A673 (cell line): ENCODE measurements at regions of chr3 and their contacts with region 1.

Region 1: GRCh38 chr3:5304789-5305683 is 117.5 kb downstream of the EDEM1 start:
- DNase-seq: peak; percentile 57
- H3K4me3 ChIP-seq: no peak overlapping the region
- H3K27ac ChIP-seq: no peak overlapping the region
- H3K4me1 ChIP-seq: no peaks in the 10 kb centered on the region
- H3K27me3 ChIP-seq: peaks cover 7% of the 10 kb centered on the region
- CTCF ChIP-seq: peak; percentile 75

Region 2: GRCh38 chr3:5136211-5136918 is 168.7 kb before region 1 on chr3:
- CTCF ChIA-PET with region 1: no interaction called
- POLR2A ChIA-PET with region 1: no interaction called
- intact Hi-C with region 1: loop called (anchors 10 kb)
- DNase-seq: peak; percentile 53
- H3K4me3 ChIP-seq: no peak overlapping the region
- H3K27ac ChIP-seq: no peak overlapping the region
- H3K4me1 ChIP-seq: peaks cover 7% of the 10 kb centered on the region
- H3K27me3 ChIP-seq: no peaks in the 10 kb centered on the region
- CTCF ChIP-seq: peak; percentile 63

Region 3: DNA sequence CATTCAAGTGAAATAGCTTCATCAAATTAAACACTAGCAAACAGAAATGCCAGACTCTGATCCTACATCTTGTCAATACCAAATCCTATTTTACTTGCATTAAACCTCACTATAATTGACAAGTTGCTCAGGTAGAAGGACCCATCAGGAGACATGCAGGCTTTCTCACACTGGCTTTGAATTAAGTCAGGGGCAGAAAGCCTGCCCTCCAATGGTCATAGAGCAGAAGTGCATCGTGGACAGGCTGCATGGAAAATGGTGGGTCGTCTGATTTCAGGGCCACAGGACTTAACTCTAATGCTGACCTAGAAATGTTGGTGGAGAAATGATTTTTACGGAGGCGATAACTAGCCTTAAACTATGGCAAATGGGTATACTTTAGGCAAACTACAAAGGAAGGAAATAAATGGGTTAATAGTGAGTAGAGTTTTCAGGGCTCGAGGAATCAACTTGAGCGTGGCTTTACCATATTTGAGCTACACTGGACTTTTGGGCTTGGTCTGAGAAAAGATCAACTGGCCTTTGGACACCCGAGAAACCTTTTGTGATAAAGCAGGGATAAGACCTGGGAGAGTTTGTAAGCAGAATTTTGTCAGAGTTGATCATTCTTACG is 1839.8 kb after region 1 on chr3:
- CTCF ChIA-PET with region 1: no interaction called
- POLR2A ChIA-PET with region 1: no interaction called
- intact Hi-C with region 1: loop called (anchors 5 kb)
- DNase-seq: peak; percentile 58
- H3K4me3 ChIP-seq: no peak overlapping the region
- H3K27ac ChIP-seq: no peak overlapping the region
- H3K4me1 ChIP-seq: no peaks in the 10 kb centered on the region
- H3K27me3 ChIP-seq: peaks cover 5% of the 10 kb centered on the region
- CTCF ChIP-seq: peak; percentile 86